Mucosa of descending colon (tissue), 3 donors: ENCODE measurements at regions of chr19 and their contacts with region 1.

Region 1: DNA sequence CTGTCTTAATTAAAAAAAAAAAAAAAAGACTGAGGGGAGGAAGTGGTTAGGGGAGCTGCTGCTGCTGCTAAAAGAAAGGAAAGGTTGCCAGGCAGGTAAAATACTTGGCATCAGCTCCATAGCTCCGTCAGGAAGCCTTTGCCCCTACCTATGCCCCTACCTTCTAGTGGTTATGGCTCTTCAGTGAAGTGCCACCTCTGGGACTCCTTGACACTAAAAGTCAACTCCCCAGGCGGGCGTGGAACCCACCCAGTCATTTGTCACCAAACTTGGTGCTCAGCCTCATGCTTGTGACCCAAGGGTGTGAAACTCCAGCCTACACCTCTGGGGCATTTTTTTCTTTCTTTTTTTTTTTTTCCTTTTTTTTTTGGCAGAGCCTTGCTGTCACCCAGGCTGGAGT is 4.9 kb upstream of the NECTIN2 start:
- DNase-seq: no peak
- ATAC-seq: no peak
- H3K4me3 ChIP-seq: no peak overlapping the region
- H3K4me1 ChIP-seq: peaks cover 10% of the 10 kb centered on the region
- CTCF ChIP-seq: no peak

Region 2: DNA sequence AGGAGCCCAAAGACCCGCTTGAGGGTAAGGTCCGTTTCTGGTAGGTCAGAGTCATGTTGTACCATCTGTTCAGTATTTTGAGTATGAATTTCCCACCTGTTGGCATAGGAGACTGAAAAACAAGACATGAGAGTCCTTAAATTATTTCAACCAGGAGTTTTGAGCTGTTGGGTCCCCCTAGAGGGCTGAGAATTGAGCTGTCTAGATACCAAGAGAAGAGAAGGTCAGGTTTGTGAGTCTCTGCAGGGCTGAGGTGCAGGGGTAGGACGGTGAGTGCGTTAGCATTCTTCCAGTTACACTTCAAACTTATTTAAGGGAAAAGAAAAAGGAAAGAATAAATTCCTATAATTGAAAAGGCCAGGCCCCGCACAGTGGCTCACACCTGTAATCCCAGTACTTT is 58.5 kb before region 1 on chr19:
- intact Hi-C with region 1: loop called (anchors 5 to 10 kb)
- DNase-seq: no peak
- ATAC-seq: no peak
- H3K4me3 ChIP-seq: no peak overlapping the region
- H3K4me1 ChIP-seq: peaks cover 15% of the 10 kb centered on the region
- CTCF ChIP-seq: no peak

Region 3: DNA sequence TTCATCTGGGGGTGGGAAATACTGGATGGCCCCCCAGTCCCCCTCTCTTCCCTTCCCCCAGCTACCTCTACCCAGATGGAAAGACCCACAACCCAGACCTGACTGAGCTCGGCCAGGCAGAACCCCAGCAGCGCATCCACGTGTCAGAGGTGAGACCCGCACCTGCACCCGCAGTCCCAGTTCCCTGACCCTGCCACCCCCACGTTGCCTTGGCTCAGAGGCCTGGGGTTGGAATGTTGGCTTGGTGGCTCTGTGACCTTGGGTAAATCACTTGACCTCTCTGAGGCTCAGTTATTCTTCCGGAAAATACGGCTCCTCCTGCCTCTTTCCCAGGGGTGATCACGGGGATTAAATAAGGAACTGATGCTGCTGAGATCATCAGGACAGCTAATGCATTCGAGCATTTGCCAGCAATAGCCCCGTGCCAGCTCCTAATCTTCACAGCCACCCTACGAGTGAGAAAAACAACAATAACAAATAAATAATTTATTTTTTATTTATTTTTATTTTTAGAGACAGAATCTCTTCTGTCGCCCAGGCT is 51.2 kb before region 1 on chr19:
- intact Hi-C with region 1: loop called (anchors 5 to 10 kb)
- DNase-seq: no peak
- ATAC-seq: no peak
- H3K4me3 ChIP-seq: no peak overlapping the region
- H3K4me1 ChIP-seq: no peaks in the 10 kb centered on the region
- CTCF ChIP-seq: no peak

Region 4: DNA sequence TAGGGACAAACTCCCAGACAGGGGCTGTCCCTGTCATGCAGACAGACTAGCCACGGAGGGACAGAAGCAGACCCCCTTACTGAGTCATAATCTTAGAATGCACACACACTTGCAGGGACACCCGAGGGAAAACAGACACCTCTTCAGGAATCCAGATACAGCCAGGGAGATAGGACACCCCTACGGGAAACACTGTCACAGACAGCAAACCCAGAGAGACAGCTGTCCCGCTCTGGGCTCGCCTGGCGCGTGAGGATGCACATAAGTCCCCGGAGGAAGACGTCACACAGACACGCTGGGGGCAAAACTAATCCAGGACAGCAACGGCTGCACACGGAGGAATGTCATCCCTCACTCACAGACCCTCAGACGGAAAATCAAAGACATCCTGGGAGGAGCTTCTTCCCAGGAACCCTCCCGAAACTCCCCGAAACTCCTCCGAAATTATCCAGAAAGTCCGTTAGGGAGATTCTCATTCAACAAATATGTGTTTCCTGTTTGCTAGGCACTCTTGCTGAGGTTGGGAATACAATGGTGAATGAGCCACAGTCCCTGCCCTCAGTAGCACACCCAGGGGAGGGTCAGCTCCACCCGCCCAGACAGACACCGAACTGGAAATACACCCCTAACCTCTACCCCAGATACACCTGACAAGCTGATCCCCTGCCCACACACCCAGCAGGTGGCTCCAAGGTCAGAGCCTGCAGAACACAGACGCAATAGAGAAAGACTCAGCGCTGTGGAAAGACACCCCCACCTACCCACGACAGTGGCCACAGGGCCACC is 34.6 kb after region 1 on chr19:
- intact Hi-C with region 1: no loop called
- DNase-seq: peak in 2 of 3 donors; percentile 57 to 69
- ATAC-seq: peak; percentile 80
- H3K4me3 ChIP-seq: no peak overlapping the region
- H3K4me1 ChIP-seq: peaks cover 11% of the 10 kb centered on the region
- CTCF ChIP-seq: no peak

Region 5: GRCh38 chr19:44939668-44940067 is 98.4 kb after region 1 on chr19:
- intact Hi-C with region 1: no loop called
- DNase-seq: no peak
- ATAC-seq: no peak
- H3K4me3 ChIP-seq: no peak overlapping the region
- H3K4me1 ChIP-seq: no peaks in the 10 kb centered on the region
- CTCF ChIP-seq: no peak